GM12878 (cell line): ENCODE measurements at regions of chr2 and their contacts with region 1.

Region 1: DNA sequence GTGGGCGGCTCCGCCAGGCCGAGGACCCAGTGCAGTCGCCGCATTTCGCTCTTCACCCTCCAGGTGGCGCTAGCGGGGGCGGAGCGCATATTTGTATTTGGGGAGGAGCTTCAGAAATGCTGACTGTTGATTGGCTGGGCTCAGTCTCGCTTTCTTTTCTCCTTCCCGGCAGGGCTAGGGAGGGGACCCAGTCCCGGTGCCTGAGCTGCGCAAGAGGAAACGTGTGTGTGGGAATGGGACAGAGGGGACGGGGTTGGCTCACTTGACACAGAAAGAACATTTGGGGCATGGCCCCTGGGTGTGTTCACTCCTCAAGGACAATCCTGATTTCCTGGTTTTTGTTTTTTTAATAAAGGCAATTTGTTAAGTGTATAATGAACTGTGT is 20.3 kb upstream of the DNMT3A start:
- DNase-seq: peak; percentile 88
- ATAC-seq: peak; percentile 92
- H3K4me3 ChIP-seq: peak overlapping the region; percentile 72
- H3K27ac ChIP-seq: peak overlapping the region; percentile 84
- H3K4me1 ChIP-seq: peaks cover 13% of the 10 kb centered on the region
- H3K27me3 ChIP-seq: no peaks in the 10 kb centered on the region
- CTCF ChIP-seq: peak; percentile 93 to 99 (median 95)
- EP300 ChIP-seq: no peak; a peak in 1 of 4 replicates
- POLR2A ChIP-seq: peak; percentile 87
- RAD21 ChIP-seq: peak; percentile 37; the same call in 1 of the 2 replicates

Region 2: GRCh38 chr2:25276569-25277465 is 85.2 kb before region 1 on chr2:
- CTCF ChIA-PET with region 1: interaction called, 27 read pairs
- POLR2A ChIA-PET with region 1: interaction called, 19 read pairs
- RAD21 ChIA-PET with region 1: interaction called, 12 read pairs
- SMC1A ChIA-PET with region 1: interaction called, 9 read pairs
- in situ Hi-C with region 1: no loop called
- intact Hi-C with region 1: no loop called
- DNase-seq: no peak
- ATAC-seq: peak; percentile 41
- H3K4me3 ChIP-seq: peak overlapping the region; percentile 45; the same call in 1 of the 2 replicates
- H3K27ac ChIP-seq: peak overlapping the region; percentile 77
- H3K4me1 ChIP-seq: peaks cover 86% of the 10 kb centered on the region
- H3K27me3 ChIP-seq: no peaks in the 10 kb centered on the region
- CTCF ChIP-seq: peak; percentile 75 to 89 (median 80)
- EP300 ChIP-seq: 0 out of 4 replicates have a peak, but pooled peaks of 1 of the 2 experiments have one; percentile 34
- POLR2A ChIP-seq: peak; percentile 54; the same call in 1 of the 2 replicates
- RAD21 ChIP-seq: peak; percentile 58; the same call in 1 of the 2 replicates

Region 3: GRCh38 chr2:25309402-25309801 is 52.6 kb before region 1 on chr2:
- CTCF ChIA-PET with region 1: interaction called, 15 read pairs
- POLR2A ChIA-PET with region 1: interaction called, 4 read pairs
- RAD21 ChIA-PET with region 1: interaction called, 4 read pairs
- SMC1A ChIA-PET with region 1: interaction called, 6 read pairs
- in situ Hi-C with region 1: no loop called
- intact Hi-C with region 1: no loop called
- DNase-seq: no peak
- ATAC-seq: peak; percentile 72
- H3K4me3 ChIP-seq: no peak overlapping the region
- H3K27ac ChIP-seq: no peak overlapping the region
- H3K4me1 ChIP-seq: peaks cover 8% of the 10 kb centered on the region
- H3K27me3 ChIP-seq: no peaks in the 10 kb centered on the region
- CTCF ChIP-seq: peak; percentile 49 to 63 (median 52)
- EP300 ChIP-seq: no peak
- POLR2A ChIP-seq: no peak
- RAD21 ChIP-seq: peak; percentile 59

Region 4: GRCh38 chr2:25376750-25377621 is 14.9 kb after region 1 on chr2:
- CTCF ChIA-PET with region 1: interaction called, 126 read pairs
- POLR2A ChIA-PET with region 1: interaction called, 40 read pairs
- RAD21 ChIA-PET with region 1: interaction called, 37 read pairs
- SMC1A ChIA-PET with region 1: interaction called, 23 read pairs
- in situ Hi-C with region 1: no loop called
- intact Hi-C with region 1: loop called (anchors 2 kb)
- DNase-seq: peak; percentile 91
- ATAC-seq: peak; percentile 97
- H3K4me3 ChIP-seq: no peak overlapping the region
- H3K27ac ChIP-seq: peak overlapping the region; percentile 80
- H3K4me1 ChIP-seq: peaks cover 39% of the 10 kb centered on the region
- H3K27me3 ChIP-seq: no peaks in the 10 kb centered on the region
- CTCF ChIP-seq: peak; percentile 75 to 96 (median 92); a peak in 5 of 6 replicates
- EP300 ChIP-seq: peak; percentile 86 to 94
- POLR2A ChIP-seq: peak; percentile 58; the same call in 1 of the 2 replicates
- RAD21 ChIP-seq: peak; percentile 76

Region 5: GRCh38 chr2:25411281-25411680 is 49.2 kb after region 1 on chr2:
- CTCF ChIA-PET with region 1: interaction called, 39 read pairs
- POLR2A ChIA-PET with region 1: interaction called, 37 read pairs
- RAD21 ChIA-PET with region 1: interaction called, 10 read pairs
- SMC1A ChIA-PET with region 1: interaction called, 39 read pairs
- in situ Hi-C with region 1: no loop called
- intact Hi-C with region 1: no loop called
- DNase-seq: no peak
- ATAC-seq: peak; percentile 63
- H3K4me3 ChIP-seq: 0 out of 2 replicates have a peak overlapping the region, but pooled peaks have one; percentile 26
- H3K27ac ChIP-seq: peak overlapping the region; percentile 71
- H3K4me1 ChIP-seq: peaks cover 31% of the 10 kb centered on the region
- H3K27me3 ChIP-seq: no peaks in the 10 kb centered on the region
- CTCF ChIP-seq: no peak
- EP300 ChIP-seq: no peak
- POLR2A ChIP-seq: no peak
- RAD21 ChIP-seq: no peak

Region 6: GRCh38 chr2:25521665-25522387 is 159.8 kb after region 1 on chr2:
- CTCF ChIA-PET with region 1: interaction called, 13 read pairs
- POLR2A ChIA-PET with region 1: interaction called, 10 read pairs
- RAD21 ChIA-PET with region 1: interaction called, 9 read pairs
- SMC1A ChIA-PET with region 1: interaction called, 5 read pairs
- in situ Hi-C with region 1: no loop called
- intact Hi-C with region 1: loop called (anchors 1 kb)
- DNase-seq: peak; percentile 90
- ATAC-seq: peak; percentile 94
- H3K4me3 ChIP-seq: no peak overlapping the region
- H3K27ac ChIP-seq: peak overlapping the region; percentile 67
- H3K4me1 ChIP-seq: peaks cover 6% of the 10 kb centered on the region; the same call in 1 of the 2 replicates
- H3K27me3 ChIP-seq: no peaks in the 10 kb centered on the region
- CTCF ChIP-seq: peak; percentile 75 to 86 (median 81)
- EP300 ChIP-seq: 0 out of 4 replicates have a peak, but pooled peaks of 1 of the 2 experiments have one; percentile 12
- POLR2A ChIP-seq: no peak
- RAD21 ChIP-seq: peak; percentile 99

Region 7: GRCh38 chr2:25620077-25620476 is 258.0 kb after region 1 on chr2:
- CTCF ChIA-PET with region 1: no interaction called
- POLR2A ChIA-PET with region 1: no interaction called
- RAD21 ChIA-PET with region 1: no interaction called
- SMC1A ChIA-PET with region 1: no interaction called
- in situ Hi-C with region 1: no loop called
- intact Hi-C with region 1: no loop called
- DNase-seq: no peak
- ATAC-seq: no peak
- H3K4me3 ChIP-seq: no peak overlapping the region
- H3K27ac ChIP-seq: no peak overlapping the region
- H3K4me1 ChIP-seq: no peaks in the 10 kb centered on the region
- H3K27me3 ChIP-seq: no peaks in the 10 kb centered on the region
- CTCF ChIP-seq: no peak
- EP300 ChIP-seq: no peak
- POLR2A ChIP-seq: no peak
- RAD21 ChIP-seq: no peak